ENCODE measurements at regions of chr6 and their contacts with region 1.

Region 1: GRCh38 chr6:33126101-33126714 is 50.4 kb downstream of the HLA-DPB1 start:
- DNase-seq: peak; percentile 91
- ATAC-seq: peak; percentile 61
- H3K4me3 Mint-ChIP-seq: peak overlapping the region; percentile 9; the same call in 1 of the 2 replicates
- H3K27ac Mint-ChIP-seq: peak overlapping the region; percentile 91
- H3K4me1 Mint-ChIP-seq: peaks cover 51% of the 10 kb centered on the region
- H3K27me3 Mint-ChIP-seq: peaks cover 2% of the 10 kb centered on the region; the same call in 1 of the 2 replicates
- CTCF ChIP-seq: peak; percentile 88

Region 2: DNA sequence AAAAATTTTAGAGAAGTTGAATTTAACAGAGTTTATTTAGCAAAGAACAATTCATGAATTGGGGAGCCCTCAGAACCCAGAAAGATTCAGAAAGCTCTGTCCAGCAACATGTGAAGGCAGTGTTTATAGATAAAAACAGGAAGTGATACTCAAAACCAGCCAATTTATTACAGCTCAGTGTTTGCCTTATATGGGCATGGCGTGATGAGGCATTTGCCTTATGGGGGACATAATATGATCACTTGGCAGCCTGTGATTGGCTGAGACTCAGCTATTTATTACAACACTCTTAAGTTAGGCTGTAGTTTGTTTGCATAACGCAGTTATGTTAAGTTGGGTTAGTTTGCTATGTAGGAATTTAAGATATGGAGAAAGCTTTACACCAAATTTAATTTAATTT is 64.2 kb before region 1 on chr6:
- CTCF ChIA-PET with region 1: no interaction called
- POLR2A ChIA-PET with region 1: no interaction called
- DNase-seq: no peak
- ATAC-seq: no peak
- H3K4me3 Mint-ChIP-seq: no peak overlapping the region
- H3K27ac Mint-ChIP-seq: no peak overlapping the region
- H3K4me1 Mint-ChIP-seq: no peaks in the 10 kb centered on the region
- H3K27me3 Mint-ChIP-seq: peaks cover 2% of the 10 kb centered on the region; the same call in 1 of the 2 replicates
- CTCF ChIP-seq: no peak

Region 3: DNA sequence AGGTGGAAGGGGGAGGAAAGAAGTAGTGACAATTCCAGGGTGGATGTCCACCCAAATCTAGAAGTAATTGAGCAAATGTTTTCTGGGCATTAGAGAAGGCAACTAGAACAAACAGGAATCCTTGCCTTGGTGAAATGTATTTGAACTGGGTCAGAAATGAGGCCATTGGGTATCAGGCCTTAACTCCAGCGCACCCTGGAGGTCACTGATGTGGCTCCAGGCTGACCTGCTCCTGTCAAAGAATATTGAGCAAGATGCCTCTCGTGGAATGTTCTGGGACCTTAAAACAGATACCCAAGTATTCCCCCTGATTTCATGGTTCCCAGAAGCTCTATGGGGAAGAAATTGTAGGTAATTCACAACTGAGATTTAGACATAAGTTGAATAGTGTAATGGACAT is 43.5 kb before region 1 on chr6:
- CTCF ChIA-PET with region 1: interaction called, 41 read pairs
- POLR2A ChIA-PET with region 1: no interaction called
- DNase-seq: peak; percentile 51
- ATAC-seq: peak; percentile 38
- H3K4me3 Mint-ChIP-seq: peak overlapping the region; percentile 9; the same call in 1 of the 2 replicates
- H3K27ac Mint-ChIP-seq: peak overlapping the region; percentile 51; the same call in 1 of the 2 replicates
- H3K4me1 Mint-ChIP-seq: peaks cover 31% of the 10 kb centered on the region
- H3K27me3 Mint-ChIP-seq: peaks cover 18% of the 10 kb centered on the region
- CTCF ChIP-seq: peak; percentile 26; the same call in 1 of the 2 replicates

Region 4: DNA sequence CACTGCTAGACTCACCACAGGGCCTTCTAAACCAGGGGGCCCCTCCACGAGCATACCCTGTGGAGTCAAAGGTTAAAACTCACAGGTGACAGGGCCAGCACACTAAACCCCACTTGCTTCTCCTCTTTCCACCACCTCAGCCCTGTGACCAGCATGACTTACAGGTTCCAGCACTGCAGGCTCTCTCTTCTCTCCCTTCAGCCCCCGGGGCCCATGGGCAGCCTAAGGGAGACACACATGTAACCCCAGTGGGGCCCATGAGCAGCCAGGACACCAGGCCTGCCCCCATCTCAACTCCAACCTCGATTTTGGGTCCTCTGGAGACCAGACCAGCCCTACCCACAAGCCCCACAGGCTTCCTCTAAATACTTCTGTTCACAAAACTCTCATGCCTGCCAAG is 22.4 kb before region 1 on chr6:
- CTCF ChIA-PET with region 1: no interaction called
- POLR2A ChIA-PET with region 1: no interaction called
- DNase-seq: no peak
- ATAC-seq: no peak
- H3K4me3 Mint-ChIP-seq: no peak overlapping the region
- H3K27ac Mint-ChIP-seq: no peak overlapping the region
- H3K4me1 Mint-ChIP-seq: no peaks in the 10 kb centered on the region
- H3K27me3 Mint-ChIP-seq: peaks cover 38% of the 10 kb centered on the region
- CTCF ChIP-seq: no peak

Region 5: DNA sequence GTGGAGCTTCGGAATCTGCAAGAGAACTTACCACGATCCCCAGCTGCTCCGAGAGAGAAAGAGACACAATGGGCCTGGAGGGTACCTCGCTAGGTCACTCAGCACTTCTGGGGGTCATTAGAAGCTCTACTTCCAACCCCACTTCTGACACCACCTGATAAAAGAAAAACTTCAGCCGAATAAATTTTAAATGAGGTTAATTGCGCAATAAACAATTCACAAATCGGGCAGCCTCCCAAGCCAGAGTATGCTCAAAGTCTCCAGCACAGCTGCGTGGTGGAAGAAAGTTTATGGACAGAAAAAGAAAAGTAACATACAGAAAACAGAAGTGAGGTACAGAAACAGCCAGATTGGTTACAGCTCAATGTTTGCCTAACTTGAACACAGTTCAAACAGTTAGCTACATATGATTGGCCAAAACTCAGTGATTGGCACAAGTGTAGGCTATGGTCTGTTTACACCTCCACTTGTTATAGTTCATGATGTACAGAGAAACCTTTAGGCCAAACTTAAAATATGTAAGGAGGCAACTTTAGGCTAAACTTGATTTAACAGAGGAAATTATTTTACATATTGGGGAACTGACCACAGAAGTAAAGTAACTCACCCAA is 13.5 kb after region 1 on chr6:
- CTCF ChIA-PET with region 1: interaction called, 76 read pairs
- POLR2A ChIA-PET with region 1: interaction called, 3 read pairs
- DNase-seq: no peak
- ATAC-seq: no peak
- H3K4me3 Mint-ChIP-seq: no peak overlapping the region
- H3K27ac Mint-ChIP-seq: no peak overlapping the region
- H3K4me1 Mint-ChIP-seq: peaks cover 4% of the 10 kb centered on the region
- H3K27me3 Mint-ChIP-seq: no peaks in the 10 kb centered on the region
- CTCF ChIP-seq: no peak

Region 6: DNA sequence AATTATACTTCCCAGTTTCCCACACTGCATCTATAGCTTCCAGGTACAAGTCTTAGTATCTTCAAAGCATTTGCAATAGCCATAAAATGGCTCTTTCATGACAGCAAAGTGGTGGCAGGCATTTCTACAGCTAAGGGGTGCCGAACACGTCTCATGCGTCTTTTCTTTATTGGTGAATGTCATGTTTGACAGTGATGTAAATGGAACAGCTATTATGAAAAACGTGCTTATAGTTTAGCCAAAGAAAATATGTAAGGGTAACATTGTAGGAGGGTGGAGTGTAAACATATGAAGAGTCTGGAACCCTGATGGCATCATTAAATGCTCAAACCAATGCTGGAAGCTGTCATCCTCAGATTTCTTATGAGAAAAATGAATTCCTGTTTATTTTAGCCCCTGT is 28.1 kb after region 1 on chr6:
- CTCF ChIA-PET with region 1: interaction called, 36 read pairs
- POLR2A ChIA-PET with region 1: no interaction called
- DNase-seq: no peak
- ATAC-seq: no peak
- H3K4me3 Mint-ChIP-seq: no peak overlapping the region
- H3K27ac Mint-ChIP-seq: no peak overlapping the region
- H3K4me1 Mint-ChIP-seq: 0 out of 2 replicates have a peak, but pooled peaks cover 2% of the 10 kb centered on the region
- H3K27me3 Mint-ChIP-seq: peaks cover 13% of the 10 kb centered on the region
- CTCF ChIP-seq: no peak

Region 7: GRCh38 chr6:33172688-33173534 is 46.7 kb after region 1 on chr6:
- CTCF ChIA-PET with region 1: interaction called, 15 read pairs
- POLR2A ChIA-PET with region 1: no interaction called
- DNase-seq: peak; percentile 71
- ATAC-seq: peak; percentile 79
- H3K4me3 Mint-ChIP-seq: no peak overlapping the region
- H3K27ac Mint-ChIP-seq: no peak overlapping the region; the same call in 1 of the 2 replicates
- H3K4me1 Mint-ChIP-seq: 0 out of 2 replicates have a peak, but pooled peaks cover 3% of the 10 kb centered on the region
- H3K27me3 Mint-ChIP-seq: peaks cover 7% of the 10 kb centered on the region; the same call in 1 of the 2 replicates
- CTCF ChIP-seq: peak; percentile 51